ENCODE measurements at regions of chr7 and their contacts with region 1.

Region 1: DNA sequence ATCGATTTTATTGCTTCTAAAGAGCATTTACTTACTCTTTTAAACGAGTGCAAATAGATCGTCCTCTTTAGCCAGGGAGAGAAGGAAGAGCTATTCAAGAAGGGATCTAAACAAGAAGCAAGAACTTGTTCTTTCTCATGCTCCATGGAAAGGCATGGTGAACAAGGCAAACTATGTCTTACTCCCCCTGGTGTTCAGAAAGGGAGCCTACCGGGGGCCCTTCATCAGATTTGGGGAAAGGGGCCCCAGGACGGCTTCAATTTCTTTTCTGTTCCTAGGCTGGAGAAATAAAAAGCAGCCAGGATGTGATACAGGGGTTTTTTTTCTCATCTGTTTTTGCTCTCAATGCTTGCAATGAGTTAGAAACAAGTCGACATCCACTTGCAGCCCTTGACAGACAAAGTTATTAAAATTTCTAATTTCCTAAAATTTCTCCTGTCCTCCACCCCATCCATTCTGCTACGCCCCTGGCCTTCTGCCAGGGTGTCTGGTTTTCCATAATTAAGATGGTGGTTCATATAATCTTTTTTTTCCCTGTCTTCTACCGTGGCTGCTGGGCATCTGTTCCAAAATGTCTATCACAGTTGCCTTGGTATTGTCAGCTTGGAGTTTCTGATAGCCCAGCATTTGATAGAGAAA is 214.4 kb downstream of the CREB5 start:
- DNase-seq: peak; percentile 68
- ATAC-seq: peak; percentile 55; the same call in 1 of the 2 replicates
- H3K4me3 ChIP-seq: no peak overlapping the region
- H3K27ac ChIP-seq: no peak overlapping the region
- H3K4me1 ChIP-seq: peaks cover 12% of the 10 kb centered on the region; the same call in 1 of the 2 replicates
- H3K27me3 ChIP-seq: no peaks in the 10 kb centered on the region
- CTCF ChIP-seq: peak; percentile 84

Region 2: GRCh38 chr7:27921081-27921836 is 705.5 kb before region 1 on chr7:
- CTCF ChIA-PET with region 1: no interaction called
- POLR2A ChIA-PET with region 1: no interaction called
- intact Hi-C with region 1: no loop called
- DNase-seq: peak; percentile 90
- ATAC-seq: peak; percentile 87
- H3K4me3 ChIP-seq: peak overlapping the region; percentile 57
- H3K27ac ChIP-seq: peak overlapping the region; percentile 66
- H3K4me1 ChIP-seq: peaks cover 45% of the 10 kb centered on the region
- H3K27me3 ChIP-seq: no peaks in the 10 kb centered on the region
- CTCF ChIP-seq: peak; percentile 82

Region 3: GRCh38 chr7:28298870-28299518 is 327.7 kb before region 1 on chr7:
- CTCF ChIA-PET with region 1: no interaction called
- POLR2A ChIA-PET with region 1: no interaction called
- intact Hi-C with region 1: loop called (anchors 1 kb)
- DNase-seq: peak; percentile 85
- ATAC-seq: peak; percentile 94
- H3K4me3 ChIP-seq: no peak overlapping the region
- H3K27ac ChIP-seq: 0 out of 2 replicates have a peak overlapping the region, but pooled peaks have one; percentile 13
- H3K4me1 ChIP-seq: peaks cover 13% of the 10 kb centered on the region
- H3K27me3 ChIP-seq: no peaks in the 10 kb centered on the region
- CTCF ChIP-seq: peak; percentile 82

Region 4: GRCh38 chr7:28410628-28411531 is 215.9 kb before region 1 on chr7:
- CTCF ChIA-PET with region 1: no interaction called
- POLR2A ChIA-PET with region 1: no interaction called
- intact Hi-C with region 1: loop called (anchors 5 kb)
- DNase-seq: peak; percentile 37
- ATAC-seq: 0 out of 2 replicates have a peak, but pooled peaks have one; percentile 5
- H3K4me3 ChIP-seq: peak overlapping the region; percentile 87
- H3K27ac ChIP-seq: no peak overlapping the region
- H3K4me1 ChIP-seq: peaks cover 28% of the 10 kb centered on the region
- H3K27me3 ChIP-seq: peaks cover 33% of the 10 kb centered on the region
- CTCF ChIP-seq: no peak

Region 5: DNA sequence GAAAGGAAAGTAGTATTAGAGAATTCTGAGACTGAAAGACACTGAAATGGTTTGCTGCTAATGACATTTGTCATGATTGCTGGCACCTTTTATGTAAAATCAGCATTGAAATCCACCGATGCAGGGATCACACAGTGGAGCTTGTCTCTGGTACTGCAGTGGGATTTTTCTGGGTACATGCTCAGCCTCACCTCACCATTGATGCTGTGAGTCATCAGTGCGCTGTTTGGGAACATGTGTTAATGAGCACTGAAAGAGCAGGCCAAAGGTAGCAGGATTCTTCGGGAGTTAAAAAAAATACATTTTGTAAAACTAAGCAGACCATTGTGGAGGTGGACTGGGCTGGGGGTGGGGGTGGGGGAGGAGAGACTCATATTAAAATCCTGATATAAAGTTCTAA is 39.5 kb before region 1 on chr7:
- CTCF ChIA-PET with region 1: no interaction called
- POLR2A ChIA-PET with region 1: no interaction called
- intact Hi-C with region 1: no loop called
- DNase-seq: peak; percentile 65
- ATAC-seq: peak; percentile 85
- H3K4me3 ChIP-seq: no peak overlapping the region; the same call in 1 of the 2 replicates
- H3K27ac ChIP-seq: peak overlapping the region; percentile 65
- H3K4me1 ChIP-seq: peaks cover 26% of the 10 kb centered on the region
- H3K27me3 ChIP-seq: peaks cover 7% of the 10 kb centered on the region
- CTCF ChIP-seq: no peak